Thyroid gland (tissue), 4 donors: ENCODE measurements at regions of chr15 and their contacts with region 1.

Region 1: DNA sequence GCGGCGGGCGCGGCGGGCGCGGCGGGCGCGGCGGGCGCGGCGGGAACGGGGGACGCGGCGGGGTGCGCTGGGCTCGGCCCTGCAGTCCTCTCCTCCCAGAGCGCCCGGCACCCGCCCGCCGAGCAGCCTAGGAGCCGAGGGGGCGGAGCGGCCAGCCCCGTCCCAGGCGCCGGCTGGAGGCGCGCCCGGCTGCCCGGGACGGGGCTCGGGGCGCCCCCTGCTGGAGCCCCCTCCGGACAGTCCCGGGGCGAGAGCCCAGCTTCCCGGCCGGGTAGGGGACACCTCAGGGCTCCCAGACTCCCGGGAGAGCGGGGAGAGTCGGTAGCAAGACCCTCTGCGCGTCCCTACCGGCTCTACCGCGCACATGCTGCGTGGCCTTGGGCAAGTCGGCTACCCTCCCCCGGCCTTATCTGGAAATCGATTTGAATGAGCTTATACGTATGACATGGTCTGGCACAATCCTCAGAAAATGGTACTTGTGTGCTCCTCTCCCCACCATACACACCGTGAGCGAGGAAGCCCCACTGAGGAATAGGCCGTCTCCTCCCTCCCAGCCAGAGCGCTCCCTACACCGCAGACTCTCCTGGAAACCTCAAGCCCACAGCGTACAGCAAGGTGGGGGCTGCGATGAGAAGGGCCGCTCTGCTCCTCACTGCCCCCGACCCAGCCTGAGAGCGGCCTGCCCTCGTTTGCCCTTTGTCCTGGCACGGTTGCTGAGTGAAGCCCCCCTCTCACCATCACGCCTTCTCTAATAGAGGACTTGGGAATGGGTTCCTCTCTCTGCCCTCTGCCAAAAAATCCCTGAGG is at the start of gene DAPK2:
- DNase-seq: peak; percentile 82 to 85
- H3K4me3 ChIP-seq: peak within 1 kb of the TSS in 2 of 3 donors; percentile 25 to 60
- H3K27ac ChIP-seq: peak within 1 kb of the TSS in 2 of 3 donors; percentile 62 to 83
- H3K4me1 ChIP-seq: peaks cover 20 to 27% of the 10 kb centered on the region in 2 donors
- H3K27me3 ChIP-seq: no peaks in the 10 kb centered on the region
- CTCF ChIP-seq: peak; percentile 48 to 95 (median 78)
- POLR2A ChIP-seq: peak in 1 of 2 donors; percentile 88
- total RNA-seq, gene DAPK2: 47.4 to 105 (median 78.7) TPM

Region 2: DNA sequence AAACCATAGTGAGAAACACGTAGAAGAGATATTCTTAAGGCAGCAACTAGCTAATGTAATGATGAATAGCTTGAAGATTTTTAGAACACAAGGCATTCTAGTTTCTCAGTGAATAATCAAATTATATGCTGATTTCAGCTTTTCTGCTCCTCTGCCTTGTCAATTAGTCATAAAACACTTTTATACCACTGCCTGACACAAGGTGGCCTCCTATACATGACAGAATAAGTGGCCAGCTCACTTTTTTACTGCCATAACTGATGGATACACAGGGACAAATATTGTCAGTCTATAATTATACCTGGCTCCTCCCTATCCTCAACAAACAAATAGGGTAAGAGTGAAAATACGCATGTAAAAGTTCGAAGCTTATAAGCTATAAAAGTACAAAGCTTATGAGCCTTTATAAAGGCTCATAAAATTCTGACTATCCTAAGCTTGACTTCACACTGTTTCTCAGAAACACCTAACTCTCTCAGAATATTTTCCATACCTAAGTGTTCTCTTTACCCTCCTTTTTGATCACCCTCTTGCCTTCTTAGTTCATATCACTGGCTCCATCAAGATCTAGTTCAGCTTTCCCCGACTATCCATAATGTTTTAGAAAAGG is 294.4 kb before region 1 on chr15:
- intact Hi-C with region 1: loop called (anchors 5 kb)
- DNase-seq: peak; percentile 22 to 29
- H3K4me3 ChIP-seq: no peak overlapping the region
- H3K27ac ChIP-seq: peak overlapping the region in 2 of 3 donors; percentile 18 to 50
- H3K4me1 ChIP-seq: peaks cover 0 to 9% of the 10 kb centered on the region in 2 donors
- H3K27me3 ChIP-seq: no peaks in the 10 kb centered on the region
- CTCF ChIP-seq: peak; percentile 55 to 89 (median 78)
- POLR2A ChIP-seq: no peak

Region 3: DNA sequence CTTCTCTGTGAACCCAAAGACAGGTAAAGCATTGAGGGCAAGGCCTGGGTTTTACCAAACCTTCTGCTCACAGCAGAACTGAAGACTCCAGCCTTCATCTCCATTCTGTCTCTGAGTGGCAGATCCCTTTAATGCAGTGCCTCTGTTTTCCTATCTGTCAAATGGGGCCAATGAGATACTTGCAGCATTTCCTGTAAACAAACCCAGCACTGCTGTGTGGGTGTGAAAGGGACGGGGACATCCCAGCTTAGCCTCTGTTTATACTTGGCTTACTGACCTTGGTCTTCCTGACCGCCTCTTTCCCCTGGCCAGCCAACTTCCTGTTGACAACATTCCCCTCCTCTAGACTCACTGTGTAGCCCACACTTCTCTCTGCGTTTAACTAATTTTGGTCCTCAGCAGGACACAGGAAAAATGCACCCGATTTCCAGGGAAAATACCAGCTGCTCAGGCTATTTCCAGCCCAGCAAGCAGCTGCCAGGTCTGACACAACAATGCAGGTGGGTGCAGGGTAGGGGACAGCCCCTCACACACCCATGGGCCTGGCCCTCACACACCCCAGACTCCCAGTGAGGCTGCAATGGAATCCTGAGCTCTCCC is 106.9 kb before region 1 on chr15:
- intact Hi-C with region 1: loop called (anchors 5 kb)
- DNase-seq: peak; percentile 49 to 63
- H3K4me3 ChIP-seq: no peak overlapping the region
- H3K27ac ChIP-seq: peak overlapping the region; percentile 90 to 98 (median 95)
- H3K4me1 ChIP-seq: peaks cover 54 to 66% of the 10 kb centered on the region in 2 donors
- H3K27me3 ChIP-seq: no peaks in the 10 kb centered on the region
- CTCF ChIP-seq: no peak
- POLR2A ChIP-seq: peak in 1 of 2 donors; percentile 27

Region 4: GRCh38 chr15:63986751-63987341 is 59.7 kb before region 1 on chr15:
- intact Hi-C with region 1: no loop called
- DNase-seq: no peak
- H3K4me3 ChIP-seq: no peak overlapping the region
- H3K27ac ChIP-seq: peak overlapping the region; percentile 89 to 96 (median 91)
- H3K4me1 ChIP-seq: peaks cover 54 to 70% of the 10 kb centered on the region in 2 donors
- H3K27me3 ChIP-seq: no peaks in the 10 kb centered on the region
- CTCF ChIP-seq: no peak
- POLR2A ChIP-seq: no peak

Region 5: GRCh38 chr15:64305261-64305660 is 258.7 kb after region 1 on chr15:
- intact Hi-C with region 1: no loop called
- DNase-seq: no peak
- H3K4me3 ChIP-seq: no peak overlapping the region
- H3K27ac ChIP-seq: no peak overlapping the region
- H3K4me1 ChIP-seq: peaks cover 0 to 5% of the 10 kb centered on the region in 2 donors
- H3K27me3 ChIP-seq: no peaks in the 10 kb centered on the region
- CTCF ChIP-seq: no peak
- POLR2A ChIP-seq: no peak